T-cell (primary cell): ENCODE measurements at regions of chr16 and their contacts with region 1.

Region 1: GRCh38 chr16:69286941-69287713 is 24.0 kb upstream of the VPS4A start:
- DNase-seq: peak in 18 of 35 experiments; percentile 10 to 82 (median 35)
- ATAC-seq: no peak
- H3K4me3 ChIP-seq: no peak overlapping the region
- H3K4me3 Mint-ChIP-seq: no peak overlapping the region
- H3K27ac ChIP-seq: no peak overlapping the region
- H3K27ac Mint-ChIP-seq: no peak overlapping the region
- H3K4me1 ChIP-seq: no peaks in the 10 kb centered on the region
- H3K4me1 Mint-ChIP-seq: peaks cover 0 to 2% (median 0%) of the 10 kb centered on the region in 3 donors
- H3K27me3 ChIP-seq: no peaks in the 10 kb centered on the region
- H3K27me3 Mint-ChIP-seq: no peaks in the 10 kb centered on the region

Region 2: DNA sequence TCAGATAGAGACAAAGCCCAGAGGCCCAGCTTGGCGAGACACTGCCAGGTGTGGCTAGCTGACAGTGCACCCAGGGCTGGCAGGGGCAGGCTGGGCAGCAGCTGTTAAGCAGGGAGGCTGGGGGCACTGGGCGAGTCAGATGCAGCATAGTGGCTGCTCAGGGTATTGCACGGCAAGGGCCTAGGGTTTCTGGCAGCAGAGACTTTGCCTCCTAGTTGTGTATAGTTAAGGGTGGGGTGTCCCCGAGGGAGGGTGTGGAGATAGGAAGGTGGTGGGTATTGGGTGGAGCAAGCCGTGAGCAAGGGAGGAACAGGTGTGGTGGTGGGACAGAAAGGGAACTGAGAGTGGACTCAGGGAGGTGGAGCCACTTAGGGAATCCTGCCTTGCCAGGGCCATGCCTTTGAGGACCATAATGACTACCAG is 904.8 kb before region 1 on chr16:
- CTCF ChIA-PET with region 1: no interaction called
- POLR2A ChIA-PET with region 1: no interaction called
- DNase-seq: peak in 2 of 35 experiments; percentile 25
- ATAC-seq: no peak
- H3K4me3 ChIP-seq: no peak overlapping the region
- H3K4me3 Mint-ChIP-seq: no peak overlapping the region
- H3K27ac ChIP-seq: no peak overlapping the region
- H3K27ac Mint-ChIP-seq: no peak overlapping the region
- H3K4me1 ChIP-seq: peaks cover 7 to 31% of the 10 kb centered on the region in 2 experiments
- H3K4me1 Mint-ChIP-seq: peaks cover 18 to 56% (median 43%) of the 10 kb centered on the region in 3 donors
- H3K27me3 ChIP-seq: no peaks in the 10 kb centered on the region
- H3K27me3 Mint-ChIP-seq: no peaks in the 10 kb centered on the region

Region 3: DNA sequence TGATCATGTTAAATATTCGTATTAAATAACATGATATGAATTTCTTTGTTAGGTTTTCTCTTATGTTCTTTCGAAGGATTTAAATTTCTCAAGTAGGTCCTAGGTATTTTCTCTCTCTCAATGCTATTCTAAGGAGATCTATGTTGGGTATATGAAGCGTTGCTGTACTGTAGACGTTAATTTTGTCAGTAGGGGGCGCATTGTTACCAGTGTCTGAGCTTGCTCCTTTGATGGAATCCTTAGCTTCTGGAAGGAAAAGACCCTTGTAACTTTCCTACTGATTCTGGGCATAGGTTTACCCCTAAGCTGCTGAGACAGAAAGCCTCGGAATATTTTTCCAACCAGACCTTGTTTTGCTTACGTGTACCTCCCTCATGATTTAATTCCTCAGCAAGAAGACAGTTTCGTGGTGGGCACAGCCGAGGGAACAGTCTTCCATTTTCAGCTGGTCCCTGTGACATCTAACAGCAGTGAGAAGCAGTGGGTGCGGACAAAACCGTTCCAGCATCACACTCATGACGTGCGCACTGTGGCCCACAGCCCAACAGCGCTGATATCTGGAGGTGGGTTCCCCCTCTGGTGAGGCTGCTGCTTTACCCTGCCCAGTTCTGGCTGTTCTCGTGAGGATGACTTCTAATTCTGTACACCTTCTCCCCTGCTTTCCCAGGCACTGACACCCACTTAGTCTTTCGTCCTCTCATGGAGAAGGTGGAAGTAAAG is 136.8 kb before region 1 on chr16:
- CTCF ChIA-PET with region 1: interaction called, 26 to 42 read pairs
- POLR2A ChIA-PET with region 1: interaction called in 1 of 2 experiments, 5 read pairs
- DNase-seq: peak in 26 of 35 experiments; percentile 11 to 83 (median 37)
- ATAC-seq: peak; percentile 65 to 81 (median 72)
- H3K4me3 ChIP-seq: no peak overlapping the region
- H3K4me3 Mint-ChIP-seq: no peak overlapping the region
- H3K27ac ChIP-seq: no peak overlapping the region
- H3K27ac Mint-ChIP-seq: no peak overlapping the region
- H3K4me1 ChIP-seq: no peaks in the 10 kb centered on the region
- H3K4me1 Mint-ChIP-seq: peaks cover 0 to 2% (median 0%) of the 10 kb centered on the region in 3 donors
- H3K27me3 ChIP-seq: no peaks in the 10 kb centered on the region
- H3K27me3 Mint-ChIP-seq: no peaks in the 10 kb centered on the region

Region 4: GRCh38 chr16:69166221-69166833 is 120.8 kb before region 1 on chr16:
- CTCF ChIA-PET with region 1: interaction called in 1 of 2 experiments, 4 read pairs
- POLR2A ChIA-PET with region 1: interaction called in 1 of 2 experiments, 12 read pairs
- DNase-seq: peak in 20 of 35 experiments; percentile 3 to 39 (median 14)
- ATAC-seq: peak; percentile 40 to 84 (median 78)
- H3K4me3 ChIP-seq: no peak overlapping the region
- H3K4me3 Mint-ChIP-seq: peak overlapping the region; percentile 6 to 33 (median 8)
- H3K27ac ChIP-seq: peak overlapping the region; percentile 8
- H3K27ac Mint-ChIP-seq: peak overlapping the region; percentile 78 to 84
- H3K4me1 ChIP-seq: peaks cover 0 to 15% of the 10 kb centered on the region in 2 experiments
- H3K4me1 Mint-ChIP-seq: peaks cover 17 to 36% (median 26%) of the 10 kb centered on the region in 3 donors
- H3K27me3 ChIP-seq: no peaks in the 10 kb centered on the region
- H3K27me3 Mint-ChIP-seq: no peaks in the 10 kb centered on the region

Region 5: GRCh38 chr16:69253870-69254341 is 33.2 kb before region 1 on chr16:
- CTCF ChIA-PET with region 1: no interaction called
- POLR2A ChIA-PET with region 1: interaction called in 1 of 2 experiments, 15 read pairs
- DNase-seq: peak in 1 of 35 experiments; percentile 27
- ATAC-seq: peak in 3 of 4 experiments; percentile 27 to 52 (median 45)
- H3K4me3 ChIP-seq: no peak overlapping the region
- H3K4me3 Mint-ChIP-seq: peak overlapping the region in 1 of 3 donors; percentile 1
- H3K27ac ChIP-seq: peak overlapping the region; percentile 47
- H3K27ac Mint-ChIP-seq: peak overlapping the region; percentile 77 to 86
- H3K4me1 ChIP-seq: peaks cover 0 to 7% of the 10 kb centered on the region in 2 experiments
- H3K4me1 Mint-ChIP-seq: peaks cover 11 to 21% (median 18%) of the 10 kb centered on the region in 3 donors
- H3K27me3 ChIP-seq: no peaks in the 10 kb centered on the region
- H3K27me3 Mint-ChIP-seq: no peaks in the 10 kb centered on the region